ENCODE measurements at regions of chr7 and their contacts with region 1.

Region 1: GRCh38 chr7:105808703-105809590 is 67.5 kb downstream of the ATXN7L1 start:
- DNase-seq: peak; percentile 96
- H3K4me3 Mint-ChIP-seq: peak overlapping the region; percentile 21
- H3K27ac Mint-ChIP-seq: peak overlapping the region; percentile 67
- H3K4me1 Mint-ChIP-seq: peaks cover 57% of the 10 kb centered on the region
- H3K27me3 Mint-ChIP-seq: no peaks in the 10 kb centered on the region

Region 2: DNA sequence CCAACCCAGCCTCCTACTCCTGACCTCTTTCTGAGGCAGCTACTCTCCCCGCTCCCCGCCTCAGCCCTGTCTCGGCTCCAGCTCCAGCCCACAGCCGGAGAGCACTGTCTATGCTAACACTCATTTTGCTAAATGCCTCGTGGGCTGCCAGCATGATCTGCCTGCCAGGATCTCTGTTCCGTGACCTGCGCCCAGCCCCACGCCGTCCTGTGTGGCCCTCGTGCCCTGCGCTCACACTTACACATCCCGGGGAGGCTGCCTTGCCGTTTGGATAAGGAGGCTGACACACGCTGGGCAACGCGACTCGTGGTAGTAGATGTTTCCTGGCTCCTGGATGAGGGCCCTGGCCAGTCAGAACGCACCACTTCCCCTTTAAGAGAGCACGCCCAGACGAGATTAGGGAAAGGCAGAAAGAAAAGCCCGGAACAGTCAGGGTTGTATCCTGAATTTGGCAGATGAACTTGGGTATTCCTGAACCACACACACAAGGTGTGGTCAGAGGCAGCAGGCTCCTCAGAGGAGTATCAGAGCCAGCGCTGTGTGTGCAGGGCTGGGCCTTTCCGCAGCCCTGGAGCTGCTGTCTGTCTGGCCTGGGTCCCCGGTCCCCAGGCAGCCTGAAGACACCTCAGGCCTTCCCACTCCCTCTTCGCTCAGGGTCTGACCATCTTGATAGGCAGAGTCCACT is 130.0 kb before region 1 on chr7:
- CTCF ChIA-PET with region 1: interaction called, 3 read pairs
- POLR2A ChIA-PET with region 1: interaction called, 4 read pairs
- intact Hi-C with region 1: loop called (anchors 1 kb)
- DNase-seq: peak; percentile 54
- H3K4me3 Mint-ChIP-seq: peak overlapping the region; percentile 78
- H3K27ac Mint-ChIP-seq: peak overlapping the region; percentile 95
- H3K4me1 Mint-ChIP-seq: peaks cover 75% of the 10 kb centered on the region
- H3K27me3 Mint-ChIP-seq: no peaks in the 10 kb centered on the region

Region 3: DNA sequence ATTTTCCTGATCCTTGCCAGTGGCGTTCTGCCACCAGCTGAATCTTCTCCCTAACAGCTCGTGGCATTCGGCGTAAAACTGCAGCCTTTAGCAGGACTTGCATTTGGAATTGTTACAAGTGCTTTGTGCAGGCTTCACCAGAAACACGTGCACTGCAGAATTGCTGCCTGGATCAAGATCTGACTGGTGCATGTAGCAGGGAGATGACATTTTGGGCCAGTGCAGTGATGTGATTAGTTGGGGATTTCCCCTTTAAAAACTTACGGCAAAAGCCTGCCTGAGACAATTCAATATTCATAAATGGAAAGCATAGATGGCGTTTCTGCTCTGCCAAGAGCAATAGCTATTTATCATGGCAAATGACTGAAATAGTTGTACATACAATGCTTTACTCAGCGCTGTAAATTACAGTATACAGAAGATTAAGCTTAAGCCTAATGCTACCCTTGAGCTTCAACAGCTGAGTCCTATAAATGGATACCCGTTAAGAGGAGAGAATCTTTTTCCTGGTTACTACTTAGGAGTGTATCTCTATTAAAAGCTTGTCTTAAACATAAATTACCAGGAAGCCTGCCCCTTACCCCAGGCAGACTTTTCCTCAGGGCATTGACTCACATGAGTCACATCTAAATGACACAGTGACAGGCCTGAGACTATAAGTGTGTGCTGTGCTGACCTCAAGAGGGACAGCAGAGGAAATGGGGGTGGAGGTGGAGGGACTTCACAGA is 38.9 kb before region 1 on chr7:
- CTCF ChIA-PET with region 1: interaction called, 21 read pairs
- POLR2A ChIA-PET with region 1: interaction called, 11 read pairs
- intact Hi-C with region 1: loop called (anchors 1 kb)
- DNase-seq: peak; percentile 49
- H3K4me3 Mint-ChIP-seq: no peak overlapping the region
- H3K27ac Mint-ChIP-seq: no peak overlapping the region
- H3K4me1 Mint-ChIP-seq: peaks cover 43% of the 10 kb centered on the region
- H3K27me3 Mint-ChIP-seq: peaks cover 7% of the 10 kb centered on the region

Region 4: DNA sequence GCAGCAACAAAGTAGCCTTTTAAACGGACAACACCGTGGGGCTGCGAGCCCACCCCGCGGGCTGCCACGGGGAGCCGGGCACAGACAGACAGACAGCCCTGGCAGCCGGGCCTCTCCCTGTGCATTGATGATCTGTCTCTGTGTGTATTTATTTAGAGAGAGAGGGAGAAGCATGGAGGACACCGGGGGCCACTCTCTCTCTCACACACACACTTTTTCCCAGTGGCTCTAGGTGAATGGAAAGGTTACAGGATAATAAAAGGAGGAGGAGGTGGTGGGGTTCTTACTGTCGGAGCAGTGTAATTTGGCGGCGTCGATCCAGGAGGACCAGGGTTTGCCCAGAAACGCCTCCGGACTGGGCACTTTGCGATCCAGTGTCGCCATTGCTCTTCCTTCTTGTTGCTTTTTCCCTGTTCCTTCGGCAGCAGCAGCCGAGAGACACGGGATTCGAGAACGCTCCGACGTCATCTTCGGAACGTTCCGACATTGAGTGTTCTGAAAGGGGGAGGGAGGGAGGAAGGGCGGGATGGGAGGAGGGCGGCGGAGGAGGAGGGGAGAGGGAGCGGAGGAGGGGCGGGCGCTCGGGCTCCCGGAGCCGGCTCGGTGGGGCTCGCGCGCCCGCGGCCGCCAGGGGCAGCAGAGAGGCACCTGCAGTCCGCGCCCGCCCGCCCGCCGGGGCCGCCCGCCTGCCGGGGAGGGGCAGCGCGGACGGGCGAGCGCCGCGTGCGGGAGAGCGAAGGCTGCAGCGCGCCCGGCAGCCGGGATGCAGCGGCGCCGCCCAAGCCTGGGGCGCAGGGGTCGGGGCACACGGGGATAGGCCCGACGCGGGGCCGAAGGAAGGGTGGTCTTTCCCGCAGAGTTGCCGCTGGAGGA is 67.4 kb after region 1 on chr7 and contains the start of gene ATXN7L1:
- CTCF ChIA-PET with region 1: no interaction called
- POLR2A ChIA-PET with region 1: no interaction called
- intact Hi-C with region 1: loop called (anchors 1 kb)
- DNase-seq: peak; percentile 93
- H3K4me3 Mint-ChIP-seq: peak within 1 kb of the TSS; percentile 88
- H3K27ac Mint-ChIP-seq: peak within 1 kb of the TSS; percentile 79
- H3K4me1 Mint-ChIP-seq: peaks cover 48% of the 10 kb centered on the region
- H3K27me3 Mint-ChIP-seq: no peaks in the 10 kb centered on the region
- total RNA-seq, gene ATXN7L1: 12.4 to 13.3 TPM

Region 5: GRCh38 chr7:106009403-106010226 is 200.7 kb after region 1 on chr7:
- CTCF ChIA-PET with region 1: interaction called, 4 read pairs
- POLR2A ChIA-PET with region 1: no interaction called
- intact Hi-C with region 1: loop called (anchors 1 kb)
- DNase-seq: peak; percentile 91
- H3K4me3 Mint-ChIP-seq: no peak overlapping the region
- H3K27ac Mint-ChIP-seq: no peak overlapping the region
- H3K4me1 Mint-ChIP-seq: peaks cover 24% of the 10 kb centered on the region
- H3K27me3 Mint-ChIP-seq: peaks cover 2% of the 10 kb centered on the region

Region 6: DNA sequence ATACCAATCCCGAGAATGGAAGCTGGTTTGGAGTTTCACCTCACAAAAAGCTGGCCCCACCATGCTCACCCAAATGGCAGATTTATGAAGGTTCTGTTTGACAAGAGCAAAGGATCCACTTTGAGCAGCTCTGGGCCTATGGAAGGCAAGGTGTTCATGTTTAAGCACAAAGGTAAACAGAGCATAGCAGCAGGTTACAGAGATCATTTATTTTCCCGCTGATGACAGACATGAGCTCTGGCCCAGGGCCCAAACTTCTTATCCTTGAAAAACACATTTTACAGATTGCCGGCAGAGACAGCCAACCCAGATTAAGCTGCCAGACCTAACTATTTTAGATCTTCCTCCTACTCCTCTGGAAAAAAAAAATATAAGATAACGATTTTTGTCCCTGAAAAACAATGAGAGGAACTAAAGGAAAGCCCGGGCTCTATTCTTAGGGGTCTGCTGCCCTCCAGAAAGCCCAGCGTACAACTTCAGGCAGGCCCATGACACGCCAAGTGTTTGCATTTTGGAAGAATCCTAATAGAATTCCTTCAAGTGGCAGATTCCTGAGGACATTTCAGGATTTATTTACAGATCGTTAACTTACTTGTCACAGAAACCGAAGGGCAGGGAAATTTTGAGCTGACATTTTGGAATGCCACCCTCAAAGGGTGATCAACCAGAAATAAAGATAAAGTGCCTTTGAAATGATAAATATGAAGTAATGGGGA is 263.2 kb after region 1 on chr7:
- CTCF ChIA-PET with region 1: no interaction called
- POLR2A ChIA-PET with region 1: no interaction called
- intact Hi-C with region 1: no loop called
- DNase-seq: no peak
- H3K4me3 Mint-ChIP-seq: peak overlapping the region; percentile 62
- H3K27ac Mint-ChIP-seq: peak overlapping the region; percentile 92
- H3K4me1 Mint-ChIP-seq: peaks cover 26% of the 10 kb centered on the region
- H3K27me3 Mint-ChIP-seq: no peaks in the 10 kb centered on the region

Region 7: GRCh38 chr7:106865130-106866041 is 1056.4 kb after region 1 on chr7 and contains the start of gene PIK3CG:
- CTCF ChIA-PET with region 1: no interaction called
- POLR2A ChIA-PET with region 1: no interaction called
- intact Hi-C with region 1: loop called (anchors 2 kb)
- DNase-seq: no peak
- H3K4me3 Mint-ChIP-seq: peak within 1 kb of the TSS; percentile 83
- H3K27ac Mint-ChIP-seq: peak within 1 kb of the TSS; percentile 79
- H3K4me1 Mint-ChIP-seq: peaks cover 73% of the 10 kb centered on the region
- H3K27me3 Mint-ChIP-seq: no peaks in the 10 kb centered on the region
- total RNA-seq, gene PIK3CG: 10.9 to 11.3 TPM